CD4-positive, alpha-beta memory T cell (primary cell): ENCODE measurements at regions of chr3 and their contacts with region 1.

Region 1: GRCh38 chr3:115692887-115693524 is 69.7 kb downstream of the GAP43 start:
- DNase-seq: peak; percentile 51 to 68 (median 56)
- H3K4me3 ChIP-seq: no peak overlapping the region
- H3K4me3 Mint-ChIP-seq: no peak overlapping the region
- H3K27ac ChIP-seq: no peak overlapping the region
- H3K27ac Mint-ChIP-seq: peak overlapping the region in 1 of 7 donors; percentile 27
- H3K4me1 ChIP-seq: no peaks in the 10 kb centered on the region
- H3K4me1 Mint-ChIP-seq: peaks cover 0 to 3% (median 0%) of the 10 kb centered on the region in 4 donors
- H3K27me3 ChIP-seq: no peaks in the 10 kb centered on the region
- H3K27me3 Mint-ChIP-seq: no peaks in the 10 kb centered on the region

Region 2: DNA sequence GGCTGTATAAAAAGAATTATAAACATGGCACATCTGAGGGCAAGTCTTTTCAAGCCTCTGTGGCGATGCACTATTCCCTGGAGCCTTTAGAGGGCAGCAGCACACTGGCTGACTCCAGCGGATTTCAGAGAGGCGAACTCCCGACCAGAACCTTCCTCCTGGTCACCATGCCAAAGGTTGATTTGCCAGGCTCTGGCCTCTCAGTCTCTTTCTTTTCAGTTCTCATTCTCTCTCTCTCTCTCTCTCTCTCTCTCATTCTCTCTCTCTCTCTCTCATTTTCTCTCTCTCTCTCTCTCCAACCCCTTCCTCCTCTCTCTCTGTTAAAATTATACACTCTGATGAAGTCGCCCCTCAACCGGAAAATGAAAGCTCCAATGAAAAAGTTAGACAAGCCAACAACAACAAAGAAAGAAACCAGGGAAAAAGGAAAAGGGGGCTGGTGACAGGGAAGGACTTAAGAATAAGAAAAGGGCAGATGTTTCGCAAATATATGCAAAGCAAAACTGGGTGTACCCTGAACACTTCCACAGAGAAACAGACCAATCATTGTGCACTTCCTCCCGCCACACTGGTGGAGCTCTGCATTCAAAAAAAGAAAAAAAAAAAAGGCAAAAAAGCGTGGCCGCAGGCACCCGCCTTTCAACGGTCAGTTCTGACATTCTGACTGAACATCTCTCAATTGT is 1309.0 kb before region 1 on chr3:
- CTCF ChIA-PET with region 1: no interaction called
- POLR2A ChIA-PET with region 1: no interaction called
- intact Hi-C with region 1: loop called (anchors 5 kb)
- DNase-seq: peak; percentile 39 to 50 (median 47)
- H3K4me3 ChIP-seq: peak overlapping the region in 1 of 2 donors; percentile 33
- H3K4me3 Mint-ChIP-seq: peak overlapping the region in 7 of 8 donors; percentile 74 to 89 (median 85)
- H3K27ac ChIP-seq: no peak overlapping the region
- H3K27ac Mint-ChIP-seq: peak overlapping the region in 5 of 7 donors; percentile 38 to 76 (median 61)
- H3K4me1 ChIP-seq: peaks cover 16% of the 10 kb centered on the region
- H3K4me1 Mint-ChIP-seq: peaks cover 8 to 15% (median 12%) of the 10 kb centered on the region in 4 donors
- H3K27me3 ChIP-seq: no peaks in the 10 kb centered on the region
- H3K27me3 Mint-ChIP-seq: no peaks in the 10 kb centered on the region

Region 3: GRCh38 chr3:115040673-115041286 is 652.2 kb before region 1 on chr3:
- CTCF ChIA-PET with region 1: interaction called, 3 read pairs
- POLR2A ChIA-PET with region 1: no interaction called
- intact Hi-C with region 1: loop called (anchors 1 kb)
- DNase-seq: peak in 4 of 5 donors; percentile 18 to 31 (median 24)
- H3K4me3 ChIP-seq: no peak overlapping the region
- H3K4me3 Mint-ChIP-seq: no peak overlapping the region
- H3K27ac ChIP-seq: no peak overlapping the region
- H3K27ac Mint-ChIP-seq: peak overlapping the region in 2 of 7 donors; percentile 65 to 66
- H3K4me1 ChIP-seq: no peaks in the 10 kb centered on the region
- H3K4me1 Mint-ChIP-seq: peaks cover 0 to 14% (median 8%) of the 10 kb centered on the region in 4 donors
- H3K27me3 ChIP-seq: no peaks in the 10 kb centered on the region
- H3K27me3 Mint-ChIP-seq: no peaks in the 10 kb centered on the region

Region 4: DNA sequence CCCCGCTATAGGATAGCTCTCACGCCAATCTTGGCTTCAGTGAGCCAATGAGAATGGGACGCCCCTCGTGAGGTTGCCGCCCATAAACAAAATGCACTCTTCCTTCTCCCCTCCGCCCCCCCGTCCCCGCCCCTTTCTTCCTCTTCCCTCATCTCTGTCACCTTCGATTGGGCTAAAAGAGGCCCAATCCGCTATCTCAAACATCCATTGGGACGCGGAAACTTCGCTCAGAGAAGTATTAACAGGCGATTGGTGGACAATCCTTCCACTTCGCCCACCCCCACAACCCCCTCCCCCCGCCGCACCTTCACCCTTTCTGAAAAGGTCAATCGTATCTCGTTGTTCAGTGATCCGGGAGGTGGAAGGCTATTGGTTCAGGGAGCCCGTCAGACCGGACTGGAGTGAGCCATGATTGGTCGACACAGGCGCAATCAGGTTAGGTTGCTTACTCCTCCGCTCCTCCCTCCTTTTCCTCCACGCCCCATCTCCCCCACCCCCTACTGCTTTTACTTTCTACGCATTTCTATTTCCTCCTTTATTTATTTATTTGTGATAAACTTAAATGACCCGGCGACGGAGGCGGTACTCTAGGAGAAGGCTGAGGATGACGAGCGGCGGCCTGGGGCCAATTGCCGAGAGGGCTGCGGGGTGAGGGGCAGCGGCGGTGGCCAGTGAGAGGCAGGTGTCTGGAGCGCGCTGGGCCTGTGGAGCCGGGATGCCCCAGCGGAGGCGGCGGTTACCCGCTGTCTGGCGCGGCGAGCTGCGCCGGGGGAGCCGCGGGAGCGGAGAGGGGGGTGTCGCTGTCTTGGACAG is 545.5 kb before region 1 on chr3:
- CTCF ChIA-PET with region 1: no interaction called
- POLR2A ChIA-PET with region 1: interaction called, 3 read pairs
- intact Hi-C with region 1: loop called (anchors 1 kb)
- DNase-seq: peak; percentile 97 to 100 (median 98)
- H3K4me3 ChIP-seq: peak overlapping the region; percentile 43 to 73
- H3K4me3 Mint-ChIP-seq: peak overlapping the region; percentile 93 to 100 (median 98)
- H3K27ac ChIP-seq: peak overlapping the region; percentile 97
- H3K27ac Mint-ChIP-seq: peak overlapping the region; percentile 90 to 100 (median 100)
- H3K4me1 ChIP-seq: peaks cover 25% of the 10 kb centered on the region
- H3K4me1 Mint-ChIP-seq: peaks cover 16 to 48% (median 28%) of the 10 kb centered on the region in 4 donors
- H3K27me3 ChIP-seq: no peaks in the 10 kb centered on the region
- H3K27me3 Mint-ChIP-seq: no peaks in the 10 kb centered on the region

Region 5: GRCh38 chr3:115217678-115218451 is 475.1 kb before region 1 on chr3:
- CTCF ChIA-PET with region 1: interaction called, 14 read pairs
- POLR2A ChIA-PET with region 1: no interaction called
- intact Hi-C with region 1: loop called (anchors 1 kb)
- DNase-seq: peak in 4 of 5 donors; percentile 5 to 21 (median 13)
- H3K4me3 ChIP-seq: no peak overlapping the region
- H3K4me3 Mint-ChIP-seq: no peak overlapping the region
- H3K27ac ChIP-seq: no peak overlapping the region
- H3K27ac Mint-ChIP-seq: peak overlapping the region in 1 of 7 donors; percentile 15
- H3K4me1 ChIP-seq: no peaks in the 10 kb centered on the region
- H3K4me1 Mint-ChIP-seq: no peaks in the 10 kb centered on the region
- H3K27me3 ChIP-seq: no peaks in the 10 kb centered on the region
- H3K27me3 Mint-ChIP-seq: peaks cover 3 to 6% of the 10 kb centered on the region in 2 donors

Region 6: DNA sequence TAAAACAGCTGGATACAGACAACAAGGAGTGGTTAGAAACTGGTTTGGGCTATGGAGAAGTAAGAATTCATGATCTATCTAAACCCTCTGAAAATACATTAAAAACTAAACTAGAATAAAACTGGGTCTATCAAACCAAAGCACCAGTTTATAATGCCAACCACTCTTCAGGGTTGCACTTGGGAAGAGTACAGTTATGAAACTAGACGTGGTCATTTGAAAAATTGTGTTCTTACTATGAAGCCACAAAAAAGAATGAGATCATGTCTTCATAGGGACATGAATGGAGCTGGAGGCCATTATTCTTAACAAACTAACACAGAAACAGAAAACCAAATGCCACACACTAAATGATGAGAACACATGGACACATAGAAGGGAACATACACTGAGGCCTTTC is 34.1 kb after region 1 on chr3:
- CTCF ChIA-PET with region 1: no interaction called
- POLR2A ChIA-PET with region 1: no interaction called
- intact Hi-C with region 1: no loop called
- DNase-seq: no peak
- H3K4me3 ChIP-seq: no peak overlapping the region
- H3K4me3 Mint-ChIP-seq: no peak overlapping the region
- H3K27ac ChIP-seq: no peak overlapping the region
- H3K27ac Mint-ChIP-seq: peak overlapping the region in 1 of 7 donors; percentile 32
- H3K4me1 ChIP-seq: no peaks in the 10 kb centered on the region
- H3K4me1 Mint-ChIP-seq: no peaks in the 10 kb centered on the region
- H3K27me3 ChIP-seq: no peaks in the 10 kb centered on the region
- H3K27me3 Mint-ChIP-seq: peaks cover 0 to 3% of the 10 kb centered on the region in 2 donors

Region 7: GRCh38 chr3:115814778-115815380 is 121.9 kb after region 1 on chr3:
- CTCF ChIA-PET with region 1: interaction called, 3 read pairs
- POLR2A ChIA-PET with region 1: no interaction called
- intact Hi-C with region 1: loop called (anchors 1 kb)
- DNase-seq: peak; percentile 39 to 57 (median 52)
- H3K4me3 ChIP-seq: no peak overlapping the region
- H3K4me3 Mint-ChIP-seq: no peak overlapping the region
- H3K27ac ChIP-seq: no peak overlapping the region
- H3K27ac Mint-ChIP-seq: no peak overlapping the region
- H3K4me1 ChIP-seq: no peaks in the 10 kb centered on the region
- H3K4me1 Mint-ChIP-seq: no peaks in the 10 kb centered on the region
- H3K27me3 ChIP-seq: no peaks in the 10 kb centered on the region
- H3K27me3 Mint-ChIP-seq: peaks cover 0 to 2% of the 10 kb centered on the region in 2 donors